Activated CD4-positive, alpha-beta memory T cell treated with anti-CD3 and anti-CD28 coated beads for 36 hours (primary cell): ENCODE measurements at regions of chr1 and their contacts with region 1.

Region 1: GRCh38 chr1:226642876-226643576 is 94.5 kb downstream of the STUM start:
- DNase-seq: peak; percentile 86
- H3K4me3 Mint-ChIP-seq: peak overlapping the region; percentile 14
- H3K27ac Mint-ChIP-seq: peak overlapping the region; percentile 76
- H3K4me1 Mint-ChIP-seq: peaks cover 56% of the 10 kb centered on the region
- H3K27me3 Mint-ChIP-seq: no peaks in the 10 kb centered on the region

Region 2: GRCh38 chr1:226656601-226657277 is 13.7 kb after region 1 on chr1:
- CTCF ChIA-PET with region 1: interaction called, 6 read pairs
- POLR2A ChIA-PET with region 1: interaction called, 18 read pairs
- intact Hi-C with region 1: loop called (anchors 1 kb)
- DNase-seq: no peak
- H3K4me3 Mint-ChIP-seq: peak overlapping the region; percentile 43
- H3K27ac Mint-ChIP-seq: no peak overlapping the region
- H3K4me1 Mint-ChIP-seq: peaks cover 29% of the 10 kb centered on the region
- H3K27me3 Mint-ChIP-seq: no peaks in the 10 kb centered on the region